Lower leg skin (tissue), 4 donors: ENCODE measurements at regions of chr9 and their contacts with region 1.

Region 1: DNA sequence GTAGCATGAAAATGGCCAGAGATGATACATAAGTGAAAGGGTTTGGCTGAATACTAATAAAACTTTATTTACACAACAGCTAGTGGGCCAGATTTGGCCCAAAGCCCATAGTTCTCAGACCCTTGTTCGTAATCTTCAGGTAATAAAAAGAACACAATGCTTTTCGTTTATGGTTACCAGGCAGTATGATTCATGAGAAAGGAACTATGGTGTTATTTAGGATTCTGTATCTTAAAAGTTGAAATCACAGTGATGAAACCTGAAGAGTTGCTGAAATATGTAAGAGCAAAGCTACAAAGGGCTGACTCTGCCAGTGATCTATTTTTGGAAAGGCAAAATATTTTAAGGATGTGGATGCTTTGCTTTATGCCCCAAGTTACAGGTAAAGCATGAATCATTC is 192.7 kb downstream of the SMC2 start:
- DNase-seq: no peak
- H3K4me3 ChIP-seq: no peak overlapping the region
- CTCF ChIP-seq: no peak
- POLR2A ChIP-seq: no peak

Region 2: DNA sequence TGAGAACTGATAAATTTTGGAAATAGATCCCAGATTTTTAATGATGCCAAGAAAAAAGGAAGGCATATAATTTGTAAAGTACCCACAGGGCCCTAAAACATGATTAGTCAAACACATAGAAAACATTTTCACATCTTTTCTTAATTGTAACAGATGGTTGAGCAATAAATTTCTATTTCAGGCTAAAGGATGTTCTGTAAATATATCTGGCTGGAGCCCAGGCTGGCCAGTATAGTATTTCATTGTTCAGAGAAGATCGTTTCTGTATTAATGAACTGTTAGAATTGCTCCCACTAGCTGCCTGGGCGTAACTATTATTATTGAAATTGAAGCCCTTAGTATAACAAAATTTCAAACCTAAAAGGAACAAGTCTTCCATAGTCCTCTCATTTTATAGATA is 298.0 kb before region 1 on chr9:
- intact Hi-C with region 1: no loop called
- DNase-seq: no peak
- H3K4me3 ChIP-seq: no peak overlapping the region
- CTCF ChIP-seq: no peak
- POLR2A ChIP-seq: no peak

Region 3: DNA sequence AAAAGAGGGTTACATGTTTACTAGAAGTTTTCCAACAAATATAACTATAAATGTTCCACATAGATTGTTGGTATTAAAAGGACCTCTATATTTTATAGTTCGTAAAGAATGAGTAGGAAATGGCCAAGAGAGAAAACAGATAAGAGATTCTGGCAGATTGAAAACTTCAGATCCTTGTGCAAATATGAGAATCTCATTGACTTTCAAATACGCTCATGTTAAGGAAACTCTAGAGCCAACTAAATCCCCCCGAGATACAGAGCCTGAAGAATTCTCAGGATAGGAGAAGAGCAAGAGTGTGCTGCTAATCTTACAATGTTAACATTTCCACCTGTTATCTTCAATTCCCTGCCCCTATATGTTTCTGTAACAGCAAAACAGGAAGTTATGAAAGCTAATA is 58.3 kb after region 1 on chr9:
- intact Hi-C with region 1: no loop called
- DNase-seq: no peak
- H3K4me3 ChIP-seq: no peak overlapping the region
- CTCF ChIP-seq: no peak
- POLR2A ChIP-seq: no peak

Region 4: GRCh38 chr9:104802110-104802509 is 515.3 kb after region 1 on chr9:
- intact Hi-C with region 1: loop called (anchors 5 kb)
- DNase-seq: no peak
- H3K4me3 ChIP-seq: no peak overlapping the region
- CTCF ChIP-seq: no peak
- POLR2A ChIP-seq: no peak